Heart left ventricle (tissue), 16 donors: ENCODE measurements at regions of chr17 and their contacts with region 1.

Region 1: DNA sequence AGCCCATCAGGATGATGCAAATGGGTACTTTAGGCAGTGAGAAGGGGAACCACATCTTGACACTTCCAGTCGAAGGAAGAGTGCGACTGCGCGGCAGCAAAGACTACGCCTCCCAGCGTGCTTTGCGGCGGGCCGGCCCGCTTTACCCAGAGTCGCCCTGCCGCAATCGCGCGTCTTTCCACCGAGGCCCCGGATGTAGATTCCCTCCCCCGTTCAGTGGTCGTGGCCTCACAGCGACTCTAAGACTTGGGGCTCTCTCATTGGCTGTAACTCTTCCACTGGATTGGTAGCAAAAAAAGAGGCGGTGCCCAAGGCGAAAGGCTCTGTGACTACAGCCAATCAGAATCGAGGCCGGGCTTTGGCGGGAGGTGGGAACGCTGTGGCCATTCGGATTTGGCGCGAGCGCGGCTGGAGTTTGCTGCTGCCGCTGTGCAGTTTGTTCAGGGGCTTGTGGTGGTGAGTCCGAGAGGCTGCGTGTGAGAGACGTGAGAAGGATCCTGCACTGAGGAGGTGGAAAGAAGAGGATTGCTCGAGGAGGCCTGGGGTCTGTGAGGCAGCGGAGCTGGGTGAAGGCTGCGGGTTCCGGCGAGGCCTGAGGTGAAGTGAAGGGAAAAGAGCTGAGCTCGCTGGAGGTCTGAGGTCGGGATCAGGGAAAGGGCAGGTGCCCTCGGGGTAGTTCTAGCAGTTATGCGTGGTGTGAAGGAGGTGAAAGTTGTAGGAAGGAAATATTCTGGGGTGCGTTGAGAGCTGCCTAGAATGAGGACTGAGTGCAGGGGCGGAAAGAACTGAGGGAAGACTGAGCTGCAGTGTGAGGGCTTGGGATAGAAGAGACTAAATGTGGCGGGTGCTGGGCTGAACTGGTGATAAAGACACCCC is at the start of gene CDC6:
- DNase-seq: peak; percentile 98 to 99 (median 99)
- ATAC-seq: peak; percentile 95 to 99 (median 98)
- H3K4me3 ChIP-seq: peak within 1 kb of the TSS in 11 of 12 donors; percentile 33 to 71 (median 57)
- H3K27ac ChIP-seq: peak within 1 kb of the TSS in 3 of 12 donors; percentile 30 to 44 (median 37)
- H3K4me1 ChIP-seq: peaks cover 4 to 49% (median 22%) of the 10 kb centered on the region in 12 donors
- H3K27me3 ChIP-seq: no peaks in the 10 kb centered on the region
- CTCF ChIP-seq: no peak
- POLR2A ChIP-seq: peak in 1 of 2 donors; percentile 26
- total RNA-seq, gene CDC6: 0.07 to 9.8 (median 0.69) TPM

Region 2: GRCh38 chr17:40019140-40019991 is 268.4 kb before region 1 on chr17:
- intact Hi-C with region 1: loop called in 6 of 10 experiments (anchors 5 to 10 kb)
- DNase-seq: no peak
- ATAC-seq: peak in 1 of 4 donors; percentile 53
- H3K4me3 ChIP-seq: no peak overlapping the region
- H3K27ac ChIP-seq: peak overlapping the region in 5 of 12 donors; percentile 13 to 67 (median 33)
- H3K4me1 ChIP-seq: peaks cover 0 to 70% (median 30%) of the 10 kb centered on the region in 12 donors
- H3K27me3 ChIP-seq: no peaks in the 10 kb centered on the region
- CTCF ChIP-seq: no peak
- POLR2A ChIP-seq: no peak

Region 3: DNA sequence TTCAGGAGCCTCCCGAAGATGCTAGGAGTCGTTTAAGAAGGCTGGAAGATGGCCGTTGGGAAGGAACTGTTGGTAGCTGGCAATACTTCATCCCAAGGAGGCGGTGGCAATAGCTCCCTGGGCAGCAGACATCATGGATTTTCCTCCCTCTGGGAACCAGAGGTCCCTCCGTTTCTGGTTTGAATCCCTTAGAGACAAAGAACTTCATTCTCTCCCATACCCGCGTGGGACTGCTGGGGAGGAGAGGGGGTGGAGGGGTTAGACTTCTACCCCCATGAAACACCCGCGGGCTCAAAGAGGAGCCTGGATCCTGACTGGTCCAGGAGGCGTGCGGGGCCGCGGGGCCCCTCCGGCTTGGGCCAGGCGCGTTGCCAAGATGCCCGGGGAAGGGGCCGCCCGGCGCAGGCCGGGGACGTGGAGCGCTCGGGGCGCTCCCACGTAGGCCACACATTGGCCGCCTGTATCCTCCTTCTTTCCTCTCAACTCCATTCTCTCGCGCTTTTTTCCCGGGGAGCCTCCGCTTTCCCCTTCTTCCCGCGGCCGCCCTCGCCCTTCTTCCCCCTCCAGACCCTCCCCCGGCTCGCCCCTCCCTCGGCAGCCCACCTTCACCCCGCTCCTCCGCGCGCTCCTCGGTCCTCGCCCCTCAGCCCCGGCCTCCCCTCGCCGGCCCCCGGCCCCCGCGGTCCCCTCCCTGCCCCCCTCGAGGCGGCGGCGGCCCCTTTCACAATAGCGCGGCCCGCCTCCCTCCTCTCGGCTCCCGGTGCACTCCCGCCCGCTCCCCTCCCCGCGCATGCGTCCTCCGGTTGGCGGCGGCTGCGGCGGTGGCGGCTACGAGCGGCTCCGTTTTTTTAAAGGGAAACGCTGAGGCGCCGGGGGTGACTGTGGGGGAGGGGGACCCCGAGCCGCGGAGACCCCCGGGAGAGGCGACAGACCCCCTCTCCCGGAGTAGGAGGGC is 166.3 kb before region 1 on chr17 and contains the start of gene MSL1:
- intact Hi-C with region 1: no loop called
- DNase-seq: peak; percentile 90 to 94 (median 92)
- ATAC-seq: peak; percentile 56 to 89 (median 89)
- H3K4me3 ChIP-seq: peak within 1 kb of the TSS; percentile 67 to 100 (median 98)
- H3K27ac ChIP-seq: peak within 1 kb of the TSS; percentile 88 to 100 (median 98)
- H3K4me1 ChIP-seq: peaks cover 0 to 38% (median 21%) of the 10 kb centered on the region in 12 donors
- H3K27me3 ChIP-seq: no peaks in the 10 kb centered on the region
- CTCF ChIP-seq: no peak
- POLR2A ChIP-seq: peak in 1 of 2 donors; percentile 54
- total RNA-seq, gene MSL1: 32.0 to 54.1 (median 45.1) TPM

Region 4: DNA sequence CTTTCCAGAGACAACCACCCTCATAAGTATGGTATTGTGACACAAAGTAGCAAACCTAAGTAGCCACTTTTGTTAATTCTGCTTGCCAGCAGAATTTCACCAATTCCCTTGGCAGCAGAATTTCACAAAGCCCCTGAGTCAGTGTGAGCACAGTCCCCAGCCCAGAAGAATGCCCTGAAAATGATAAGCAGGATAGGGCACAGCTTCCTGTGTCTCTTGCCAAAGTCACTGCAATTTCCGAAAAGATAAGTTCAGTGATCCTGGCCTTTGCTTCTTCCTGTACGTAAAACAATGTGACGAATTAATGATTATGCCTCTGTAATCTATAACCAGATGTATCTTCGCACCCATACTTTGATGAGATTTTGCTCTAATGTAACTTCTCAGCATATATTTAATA is 84.6 kb before region 1 on chr17:
- intact Hi-C with region 1: loop called (anchors 2 to 5 kb)
- DNase-seq: no peak
- ATAC-seq: peak in 2 of 4 donors; percentile 65
- H3K4me3 ChIP-seq: no peak overlapping the region
- H3K27ac ChIP-seq: no peak overlapping the region
- H3K4me1 ChIP-seq: peaks cover 0 to 16% (median 0%) of the 10 kb centered on the region in 12 donors
- H3K27me3 ChIP-seq: no peaks in the 10 kb centered on the region
- CTCF ChIP-seq: no peak
- POLR2A ChIP-seq: no peak

Region 5: DNA sequence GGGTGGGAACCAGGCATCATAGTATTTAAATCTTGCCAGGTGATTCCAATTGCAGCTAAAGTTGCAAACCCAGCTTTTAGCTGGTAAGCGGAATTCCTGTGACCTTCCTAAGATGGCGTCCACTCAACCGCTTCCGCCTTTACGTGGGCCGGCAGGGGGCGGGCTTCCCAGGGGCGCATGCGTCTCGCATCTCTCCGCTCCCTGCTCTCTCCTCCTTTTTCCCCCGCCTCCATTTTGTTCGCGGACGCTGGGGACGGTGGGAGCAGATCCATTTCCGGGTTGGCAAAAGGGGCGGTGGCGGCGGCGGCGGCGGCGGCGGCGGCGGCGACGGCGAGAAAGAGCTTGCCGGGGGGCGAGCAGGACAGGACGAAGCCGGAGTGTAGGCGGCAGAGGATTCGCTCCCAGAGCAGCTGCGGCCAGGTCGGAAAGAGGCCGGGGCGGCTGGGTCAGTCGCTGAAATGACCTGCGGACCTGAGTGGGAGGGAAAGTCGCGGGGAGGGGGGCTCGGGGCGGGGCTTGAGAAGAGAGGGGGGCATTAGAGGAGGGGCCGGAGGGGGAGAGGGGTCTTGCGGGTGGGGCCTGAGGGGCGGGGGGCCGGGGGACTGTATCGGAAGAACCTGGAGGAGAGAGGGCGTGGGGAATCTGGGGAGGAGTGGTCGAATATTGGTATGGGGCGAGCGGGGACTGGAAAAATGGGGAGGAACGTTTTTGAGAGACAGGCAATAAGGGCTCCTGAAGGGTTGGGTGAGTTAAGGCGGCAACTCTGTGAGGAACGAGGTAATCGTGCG is 68.5 kb before region 1 on chr17 and contains the start of gene WIPF2:
- intact Hi-C with region 1: loop called in 6 of 10 experiments (anchors 5 kb)
- DNase-seq: peak; percentile 97 to 98 (median 97)
- ATAC-seq: peak; percentile 98 to 99 (median 99)
- H3K4me3 ChIP-seq: peak within 1 kb of the TSS; percentile 53 to 91 (median 71)
- H3K27ac ChIP-seq: peak within 1 kb of the TSS; percentile 69 to 96 (median 91)
- H3K4me1 ChIP-seq: peaks cover 0 to 28% (median 12%) of the 10 kb centered on the region in 12 donors
- H3K27me3 ChIP-seq: no peaks in the 10 kb centered on the region
- CTCF ChIP-seq: peak; percentile 56 to 93 (median 82)
- POLR2A ChIP-seq: peak in 1 of 2 donors; percentile 79
- total RNA-seq, gene WIPF2: 8.4 to 17.6 (median 11.2) TPM

Region 6: GRCh38 chr17:40224718-40225550 is 62.8 kb before region 1 on chr17:
- intact Hi-C with region 1: loop called in 1 of 10 experiments (anchors 5 kb)
- DNase-seq: peak in 3 of 5 donors; percentile 27 to 53 (median 28)
- ATAC-seq: peak in 2 of 4 donors; percentile 46 to 59
- H3K4me3 ChIP-seq: no peak overlapping the region
- H3K27ac ChIP-seq: peak overlapping the region in 6 of 12 donors; percentile 21 to 54 (median 41)
- H3K4me1 ChIP-seq: peaks cover 0 to 38% (median 21%) of the 10 kb centered on the region in 12 donors
- H3K27me3 ChIP-seq: no peaks in the 10 kb centered on the region
- CTCF ChIP-seq: no peak
- POLR2A ChIP-seq: no peak

Region 7: GRCh38 chr17:40247926-40248495 is 39.7 kb before region 1 on chr17:
- intact Hi-C with region 1: loop called in 1 of 10 experiments (anchors 5 kb)
- DNase-seq: no peak
- ATAC-seq: no peak
- H3K4me3 ChIP-seq: no peak overlapping the region
- H3K27ac ChIP-seq: no peak overlapping the region
- H3K4me1 ChIP-seq: peaks cover 0 to 43% (median 16%) of the 10 kb centered on the region in 12 donors
- H3K27me3 ChIP-seq: no peaks in the 10 kb centered on the region
- CTCF ChIP-seq: no peak
- POLR2A ChIP-seq: no peak